ENCODE measurements at regions of chr5 and their contacts with region 1.

Region 1: GRCh38 chr5:129664337-129664937 is 83.5 kb upstream of the MINAR2 start:
- DNase-seq: no peak
- ATAC-seq: peak; percentile 64; the same call in 2 of the 3 replicates
- H3K4me3 ChIP-seq: no peak overlapping the region
- H3K27ac ChIP-seq: no peak overlapping the region
- H3K4me1 ChIP-seq: no peaks in the 10 kb centered on the region
- H3K27me3 ChIP-seq: no peaks in the 10 kb centered on the region
- CTCF ChIP-seq: peak; percentile 65 to 81 (median 78)
- EP300 ChIP-seq: no peak
- POLR2A ChIP-seq: no peak
- RAD21 ChIP-seq: peak; percentile 45

Region 2: GRCh38 chr5:129593525-129593924 is 70.9 kb before region 1 on chr5:
- CTCF ChIA-PET with region 1: no interaction called
- POLR2A ChIA-PET with region 1: no interaction called
- RAD21 ChIA-PET with region 1: no interaction called
- SMC1A ChIA-PET with region 1: no interaction called
- in situ Hi-C with region 1: no loop called
- intact Hi-C with region 1: no loop called
- DNase-seq: no peak
- ATAC-seq: no peak; the same call in 2 of the 3 replicates
- H3K4me3 ChIP-seq: no peak overlapping the region
- H3K27ac ChIP-seq: no peak overlapping the region
- H3K4me1 ChIP-seq: no peaks in the 10 kb centered on the region
- H3K27me3 ChIP-seq: no peaks in the 10 kb centered on the region
- CTCF ChIP-seq: no peak
- EP300 ChIP-seq: no peak
- POLR2A ChIP-seq: no peak
- RAD21 ChIP-seq: no peak

Region 3: GRCh38 chr5:129718471-129719090 is 54.1 kb after region 1 on chr5:
- CTCF ChIA-PET with region 1: no interaction called
- POLR2A ChIA-PET with region 1: no interaction called
- RAD21 ChIA-PET with region 1: no interaction called
- SMC1A ChIA-PET with region 1: no interaction called
- in situ Hi-C with region 1: no loop called
- intact Hi-C with region 1: no loop called
- DNase-seq: no peak
- ATAC-seq: no peak
- H3K4me3 ChIP-seq: no peak overlapping the region
- H3K27ac ChIP-seq: no peak overlapping the region
- H3K4me1 ChIP-seq: no peaks in the 10 kb centered on the region
- H3K27me3 ChIP-seq: no peaks in the 10 kb centered on the region
- CTCF ChIP-seq: no peak
- EP300 ChIP-seq: no peak
- POLR2A ChIP-seq: no peak
- RAD21 ChIP-seq: no peak

Region 4: GRCh38 chr5:129852747-129853352 is 188.4 kb after region 1 on chr5:
- CTCF ChIA-PET with region 1: interaction called, 5 read pairs
- POLR2A ChIA-PET with region 1: no interaction called
- RAD21 ChIA-PET with region 1: no interaction called
- SMC1A ChIA-PET with region 1: no interaction called
- in situ Hi-C with region 1: no loop called
- intact Hi-C with region 1: loop called (anchors 10 kb)
- DNase-seq: peak; percentile 8
- ATAC-seq: peak; percentile 99
- H3K4me3 ChIP-seq: no peak overlapping the region
- H3K27ac ChIP-seq: no peak overlapping the region
- H3K4me1 ChIP-seq: no peaks in the 10 kb centered on the region
- H3K27me3 ChIP-seq: no peaks in the 10 kb centered on the region
- CTCF ChIP-seq: peak; percentile 76 to 95 (median 93)
- EP300 ChIP-seq: no peak
- POLR2A ChIP-seq: no peak
- RAD21 ChIP-seq: peak; percentile 76